Left ventricle myocardium inferior (tissue), 1 donor: ENCODE measurements at regions of chr2 and their contacts with region 1.

Region 1: GRCh38 chr2:222613715-222614331 is 42.1 kb downstream of the FARSB start:
- DNase-seq: no peak
- H3K4me3 ChIP-seq: no peak overlapping the region
- H3K27ac ChIP-seq: no peak overlapping the region
- H3K4me1 ChIP-seq: no peaks in the 10 kb centered on the region
- H3K27me3 ChIP-seq: no peaks in the 10 kb centered on the region
- CTCF ChIP-seq: peak; percentile 81

Region 2: DNA sequence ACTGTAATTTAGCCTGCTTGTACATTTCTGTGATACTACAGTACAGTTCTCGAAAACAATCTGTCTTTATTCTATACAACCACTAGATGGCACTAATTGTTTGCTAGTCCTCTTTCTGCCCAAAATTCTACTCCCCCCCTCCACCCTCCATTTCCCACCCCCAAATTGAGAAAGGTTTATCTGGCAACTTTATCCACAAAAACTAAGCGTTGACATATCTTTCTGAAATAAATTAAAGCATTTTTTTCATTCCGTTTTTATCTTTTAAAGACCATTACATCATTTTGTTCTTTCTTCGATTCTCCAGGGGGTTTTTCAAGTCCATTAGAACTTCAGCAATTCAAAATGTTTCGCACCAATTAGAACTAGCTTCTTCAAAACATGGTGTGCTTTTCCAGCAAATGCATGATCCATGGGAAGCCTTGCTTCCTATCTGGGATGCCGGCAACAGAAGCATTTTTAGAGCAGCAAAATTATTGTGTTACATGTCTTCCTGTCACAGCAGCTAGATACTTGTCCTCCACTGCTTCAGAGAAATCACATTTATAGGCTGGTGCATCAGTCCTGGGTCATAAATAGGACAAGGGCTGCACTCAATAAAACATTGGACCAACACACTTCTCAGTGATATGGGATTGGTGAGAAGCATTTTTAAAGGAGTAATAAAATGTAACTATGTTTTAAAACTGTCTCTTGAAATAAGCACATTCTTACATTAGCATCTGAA is 556.3 kb before region 1 on chr2:
- intact Hi-C with region 1: loop called (anchors 5 kb)
- DNase-seq: no peak
- H3K4me3 ChIP-seq: no peak overlapping the region
- H3K27ac ChIP-seq: no peak overlapping the region
- H3K4me1 ChIP-seq: no peaks in the 10 kb centered on the region
- H3K27me3 ChIP-seq: peaks cover 79% of the 10 kb centered on the region
- CTCF ChIP-seq: peak; percentile 72

Region 3: GRCh38 chr2:222494104-222494739 is 119.6 kb before region 1 on chr2:
- intact Hi-C with region 1: no loop called
- DNase-seq: no peak
- H3K4me3 ChIP-seq: no peak overlapping the region
- H3K27ac ChIP-seq: peak overlapping the region; percentile 12
- H3K4me1 ChIP-seq: peaks cover 24% of the 10 kb centered on the region
- H3K27me3 ChIP-seq: no peaks in the 10 kb centered on the region
- CTCF ChIP-seq: no peak